ENCODE measurements at regions of chr5 and their contacts with region 1.

Region 1: GRCh38 chr5:64612344-64612961 is 77.8 kb upstream of the SHISAL2B start:
- DNase-seq: no peak
- ATAC-seq: peak; percentile 72
- H3K4me3 ChIP-seq: no peak overlapping the region
- H3K27ac ChIP-seq: no peak overlapping the region
- H3K4me1 ChIP-seq: no peaks in the 10 kb centered on the region
- H3K27me3 ChIP-seq: no peaks in the 10 kb centered on the region
- CTCF ChIP-seq: peak; percentile 65 to 80 (median 67)
- EP300 ChIP-seq: no peak
- POLR2A ChIP-seq: no peak
- RAD21 ChIP-seq: peak; percentile 90

Region 2: DNA sequence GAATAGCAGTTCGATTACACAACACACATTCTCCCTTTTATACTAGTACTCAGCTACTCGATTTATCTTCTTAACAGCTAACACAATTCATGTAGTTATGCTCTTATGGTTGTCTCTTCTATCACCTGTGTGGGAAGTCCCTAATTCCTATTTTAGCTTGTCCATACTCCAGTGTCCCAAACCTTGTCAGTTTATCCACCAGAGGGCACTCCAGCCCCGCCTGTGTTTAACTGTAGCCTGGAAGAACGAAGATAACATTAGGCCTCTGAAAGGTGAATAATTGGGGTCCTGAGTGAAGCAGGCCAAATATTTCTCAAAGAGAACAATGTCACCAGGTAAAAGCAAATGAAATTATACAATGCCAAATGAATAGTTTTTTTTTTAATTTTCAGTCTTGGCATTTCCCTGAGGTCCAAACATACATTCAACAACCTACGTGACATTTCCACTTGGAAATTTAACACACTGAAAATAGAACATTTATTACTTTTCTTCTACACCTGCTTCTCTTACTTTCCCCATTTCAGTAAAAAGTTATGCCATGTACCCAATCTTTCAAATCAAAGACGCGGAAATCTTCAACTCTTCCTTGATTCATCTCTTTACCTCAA is 1210.9 kb before region 1 on chr5:
- CTCF ChIA-PET with region 1: interaction called, 4 read pairs
- POLR2A ChIA-PET with region 1: no interaction called
- RAD21 ChIA-PET with region 1: no interaction called
- SMC1A ChIA-PET with region 1: no interaction called
- in situ Hi-C with region 1: no loop called
- intact Hi-C with region 1: loop called (anchors 5 kb)
- DNase-seq: peak; percentile 1
- ATAC-seq: peak; percentile 95
- H3K4me3 ChIP-seq: no peak overlapping the region
- H3K27ac ChIP-seq: no peak overlapping the region
- H3K4me1 ChIP-seq: no peaks in the 10 kb centered on the region
- H3K27me3 ChIP-seq: no peaks in the 10 kb centered on the region
- CTCF ChIP-seq: peak; percentile 64 to 76 (median 76)
- EP300 ChIP-seq: no peak
- POLR2A ChIP-seq: no peak
- RAD21 ChIP-seq: peak; percentile 87

Region 3: GRCh38 chr5:64147849-64148441 is 464.5 kb before region 1 on chr5:
- CTCF ChIA-PET with region 1: interaction called, 154 read pairs
- POLR2A ChIA-PET with region 1: no interaction called
- RAD21 ChIA-PET with region 1: interaction called, 107 read pairs
- SMC1A ChIA-PET with region 1: interaction called, 121 read pairs
- in situ Hi-C with region 1: loop called (anchors 5 kb)
- intact Hi-C with region 1: loop called (anchors 1 kb)
- DNase-seq: no peak
- ATAC-seq: peak; percentile 76
- H3K4me3 ChIP-seq: no peak overlapping the region
- H3K27ac ChIP-seq: no peak overlapping the region
- H3K4me1 ChIP-seq: no peaks in the 10 kb centered on the region
- H3K27me3 ChIP-seq: no peaks in the 10 kb centered on the region
- CTCF ChIP-seq: peak; percentile 57 to 82 (median 67)
- EP300 ChIP-seq: no peak
- POLR2A ChIP-seq: no peak
- RAD21 ChIP-seq: peak; percentile 73

Region 4: GRCh38 chr5:64229163-64229774 is 383.2 kb before region 1 on chr5:
- CTCF ChIA-PET with region 1: interaction called, 154 read pairs
- POLR2A ChIA-PET with region 1: no interaction called
- RAD21 ChIA-PET with region 1: interaction called, 67 read pairs
- SMC1A ChIA-PET with region 1: interaction called, 79 read pairs
- in situ Hi-C with region 1: no loop called
- intact Hi-C with region 1: loop called (anchors 1 kb)
- DNase-seq: no peak
- ATAC-seq: peak; percentile 78
- H3K4me3 ChIP-seq: no peak overlapping the region
- H3K27ac ChIP-seq: no peak overlapping the region
- H3K4me1 ChIP-seq: no peaks in the 10 kb centered on the region
- H3K27me3 ChIP-seq: no peaks in the 10 kb centered on the region
- CTCF ChIP-seq: peak; percentile 46 to 58 (median 57); a peak in 5 of 6 replicates
- EP300 ChIP-seq: no peak
- POLR2A ChIP-seq: no peak
- RAD21 ChIP-seq: peak; percentile 64

Region 5: DNA sequence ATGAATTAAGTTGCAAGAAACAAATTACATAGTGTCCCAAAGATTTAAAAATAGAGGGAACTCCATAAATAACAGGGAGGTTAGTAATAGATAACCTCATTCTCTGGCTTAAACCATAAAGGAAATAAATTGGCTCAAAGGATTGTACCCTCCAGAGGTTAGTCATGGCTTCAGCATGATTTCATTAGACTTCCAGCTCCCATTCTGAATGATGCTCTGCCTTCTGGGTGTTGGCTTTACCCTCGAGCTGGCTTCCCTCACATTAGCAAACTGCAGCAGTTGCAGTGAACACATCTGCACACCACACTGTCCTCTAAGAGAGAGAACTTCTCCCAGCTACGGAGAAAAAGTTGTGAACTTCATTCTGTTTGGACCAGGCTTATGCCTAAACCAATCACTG is 36.2 kb before region 1 on chr5:
- CTCF ChIA-PET with region 1: interaction called, 5 read pairs
- POLR2A ChIA-PET with region 1: no interaction called
- RAD21 ChIA-PET with region 1: interaction called, 9 read pairs
- SMC1A ChIA-PET with region 1: interaction called, 14 read pairs
- in situ Hi-C with region 1: no loop called
- intact Hi-C with region 1: no loop called
- DNase-seq: no peak
- ATAC-seq: no peak
- H3K4me3 ChIP-seq: no peak overlapping the region
- H3K27ac ChIP-seq: no peak overlapping the region
- H3K4me1 ChIP-seq: no peaks in the 10 kb centered on the region
- H3K27me3 ChIP-seq: no peaks in the 10 kb centered on the region
- CTCF ChIP-seq: no peak
- EP300 ChIP-seq: no peak
- POLR2A ChIP-seq: no peak
- RAD21 ChIP-seq: no peak

Region 6: GRCh38 chr5:64634997-64635686 is 22.7 kb after region 1 on chr5:
- CTCF ChIA-PET with region 1: interaction called, 12 read pairs
- POLR2A ChIA-PET with region 1: no interaction called
- RAD21 ChIA-PET with region 1: no interaction called
- SMC1A ChIA-PET with region 1: interaction called, 8 read pairs
- in situ Hi-C with region 1: no loop called
- intact Hi-C with region 1: no loop called
- DNase-seq: no peak
- ATAC-seq: peak; percentile 53
- H3K4me3 ChIP-seq: no peak overlapping the region
- H3K27ac ChIP-seq: no peak overlapping the region
- H3K4me1 ChIP-seq: 0 out of 2 replicates have a peak, but pooled peaks cover 5% of the 10 kb centered on the region
- H3K27me3 ChIP-seq: no peaks in the 10 kb centered on the region; a peak in 1 of 4 replicates
- CTCF ChIP-seq: peak; percentile 47 to 59 (median 58); a peak in 5 of 6 replicates
- EP300 ChIP-seq: no peak
- POLR2A ChIP-seq: no peak
- RAD21 ChIP-seq: peak; percentile 80

Region 7: DNA sequence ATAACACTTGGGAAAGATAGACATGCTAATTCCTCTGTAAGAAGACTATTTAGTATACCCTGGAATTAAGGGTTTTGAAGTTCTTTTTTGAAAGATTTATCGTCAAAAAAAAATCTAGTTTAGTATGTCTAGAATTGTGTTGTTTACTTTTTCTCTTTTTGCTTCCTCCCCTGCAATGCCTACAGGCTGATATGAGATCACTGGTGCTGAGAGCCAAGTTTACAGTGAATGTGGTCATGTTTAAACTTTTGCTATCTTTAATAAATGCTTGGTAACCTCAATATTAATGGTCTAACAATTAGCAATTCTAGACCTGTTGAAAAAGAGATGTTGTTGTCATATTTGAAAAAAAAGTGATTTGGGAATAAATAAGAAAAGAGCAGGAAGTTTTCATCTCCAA is 242.4 kb after region 1 on chr5:
- CTCF ChIA-PET with region 1: no interaction called
- POLR2A ChIA-PET with region 1: no interaction called
- RAD21 ChIA-PET with region 1: no interaction called
- SMC1A ChIA-PET with region 1: no interaction called
- in situ Hi-C with region 1: no loop called
- intact Hi-C with region 1: no loop called
- DNase-seq: no peak
- ATAC-seq: no peak
- H3K4me3 ChIP-seq: no peak overlapping the region
- H3K27ac ChIP-seq: no peak overlapping the region
- H3K4me1 ChIP-seq: no peaks in the 10 kb centered on the region
- H3K27me3 ChIP-seq: no peaks in the 10 kb centered on the region
- CTCF ChIP-seq: no peak
- EP300 ChIP-seq: no peak
- POLR2A ChIP-seq: no peak
- RAD21 ChIP-seq: no peak

Measured in GM12878 (cell line).